Lower leg skin (tissue), 4 donors: ENCODE measurements at regions of chr6 and their contacts with region 1.

Region 1: GRCh38 chr6:17478223-17478907 is 85.0 kb downstream of the CAP2 start:
- DNase-seq: peak in 1 of 2 donors; percentile 29
- H3K4me3 ChIP-seq: no peak overlapping the region
- CTCF ChIP-seq: no peak
- POLR2A ChIP-seq: no peak

Region 2: DNA sequence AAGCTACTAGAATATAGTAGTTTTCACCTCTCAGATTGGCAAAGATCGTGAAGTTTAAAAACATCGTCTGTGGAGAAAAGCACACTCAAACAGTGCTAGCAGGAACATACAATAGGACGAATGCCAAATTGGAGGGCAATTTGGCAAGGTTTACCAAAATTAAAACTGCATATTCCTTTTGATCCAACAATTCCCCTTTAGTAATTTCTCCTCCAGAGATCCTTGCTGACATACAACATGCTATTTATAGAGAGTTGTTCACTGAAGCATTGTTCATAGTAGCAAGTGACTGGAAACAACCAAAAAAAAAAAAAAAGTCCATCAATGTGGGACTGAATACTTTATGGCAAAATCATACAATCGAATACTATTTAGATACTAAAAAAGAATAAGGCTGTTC is 919.3 kb before region 1 on chr6:
- intact Hi-C with region 1: loop called (anchors 5 kb)
- DNase-seq: no peak
- H3K4me3 ChIP-seq: no peak overlapping the region
- CTCF ChIP-seq: no peak
- POLR2A ChIP-seq: no peak

Region 3: DNA sequence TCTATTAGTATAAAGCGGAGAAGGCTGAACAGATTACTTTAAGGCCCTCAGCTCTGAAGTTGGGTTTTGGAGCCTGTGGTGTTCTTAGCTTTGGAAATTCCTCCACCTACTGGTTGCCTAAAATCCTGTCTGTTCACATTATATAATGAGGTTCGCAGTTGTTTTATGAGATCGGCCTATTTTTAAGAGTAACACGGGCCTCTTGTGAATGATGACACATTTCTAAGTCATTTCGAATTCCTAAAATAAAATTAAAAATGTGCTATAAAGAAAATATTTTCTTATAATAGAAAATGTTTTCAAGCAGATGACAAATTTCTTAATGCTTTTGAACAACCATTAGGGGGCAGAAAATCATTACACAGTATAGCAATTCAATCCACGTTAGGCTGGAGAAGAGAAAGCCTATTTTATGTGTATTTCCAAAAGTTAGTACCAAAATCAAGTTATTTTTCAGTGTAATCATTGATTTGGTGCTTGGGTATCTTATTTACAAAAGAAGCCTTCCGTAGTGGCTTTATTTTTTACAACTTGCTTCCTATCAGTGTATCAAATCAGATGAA is 106.0 kb after region 1 on chr6:
- intact Hi-C with region 1: no loop called
- DNase-seq: peak in 1 of 2 donors; percentile 37
- H3K4me3 ChIP-seq: no peak overlapping the region
- CTCF ChIP-seq: peak in 1 of 3 donors; percentile 81
- POLR2A ChIP-seq: no peak